Pancreas (tissue), 10 donors: ENCODE measurements at regions of chr17 and their contacts with region 1.

Region 1: DNA sequence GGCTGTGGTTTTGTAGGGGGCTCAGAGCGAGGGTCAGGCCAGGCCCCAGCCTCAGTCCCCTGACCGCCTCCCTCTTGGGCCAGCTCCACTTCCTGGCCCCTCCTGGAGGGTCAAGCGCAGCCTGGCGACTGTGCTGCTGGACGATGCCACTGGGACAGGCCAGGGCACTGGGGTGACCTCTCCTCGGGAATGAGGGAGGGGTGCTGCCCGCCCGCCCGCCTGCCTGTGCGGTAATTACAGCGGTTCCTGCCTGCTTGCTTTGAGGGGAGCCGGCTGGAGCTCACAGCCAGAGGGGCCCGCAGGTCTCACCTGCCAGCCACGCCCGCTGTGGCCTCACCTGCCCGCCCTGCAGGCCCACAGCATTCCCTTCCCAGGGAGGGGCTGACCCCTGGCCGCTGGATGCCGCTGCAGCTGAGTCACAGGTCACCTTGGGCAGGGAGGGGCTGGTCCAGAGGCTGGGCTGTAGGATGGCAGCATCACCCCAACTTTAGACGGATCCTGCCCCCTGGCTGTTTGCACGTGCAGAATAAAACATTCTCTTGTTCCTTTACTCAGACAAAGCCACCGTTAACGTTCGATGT is 76.7 kb upstream of the CBX4 start:
- DNase-seq: peak in 4 of 6 donors; percentile 60 to 82 (median 65)
- ATAC-seq: peak in 2 of 4 donors; percentile 12 to 26
- H3K4me3 ChIP-seq: no peak overlapping the region
- H3K27ac ChIP-seq: no peak overlapping the region
- H3K4me1 ChIP-seq: peaks cover 19 to 25% (median 19%) of the 10 kb centered on the region in 3 donors
- H3K27me3 ChIP-seq: no peaks in the 10 kb centered on the region
- CTCF ChIP-seq: no peak

Region 2: GRCh38 chr17:79691931-79692330 is 224.0 kb before region 1 on chr17:
- intact Hi-C with region 1: no loop called
- DNase-seq: no peak
- ATAC-seq: no peak
- H3K4me3 ChIP-seq: no peak overlapping the region
- H3K27ac ChIP-seq: no peak overlapping the region
- H3K4me1 ChIP-seq: no peaks in the 10 kb centered on the region
- H3K27me3 ChIP-seq: no peaks in the 10 kb centered on the region
- CTCF ChIP-seq: no peak

Region 3: GRCh38 chr17:79850571-79851461 is 65.1 kb before region 1 on chr17:
- intact Hi-C with region 1: loop called in 1 of 3 experiments (anchors 10 kb)
- DNase-seq: peak in 1 of 6 donors; percentile 36
- ATAC-seq: no peak
- H3K4me3 ChIP-seq: no peak overlapping the region
- H3K27ac ChIP-seq: peak overlapping the region in 1 of 4 donors; percentile 51
- H3K4me1 ChIP-seq: no peaks in the 10 kb centered on the region
- H3K27me3 ChIP-seq: no peaks in the 10 kb centered on the region
- CTCF ChIP-seq: no peak

Region 4: GRCh38 chr17:79970576-79971068 is 54.7 kb after region 1 on chr17:
- intact Hi-C with region 1: no loop called
- DNase-seq: peak in 2 of 6 donors; percentile 11 to 56
- ATAC-seq: peak in 1 of 4 donors; percentile 58
- H3K4me3 ChIP-seq: no peak overlapping the region
- H3K27ac ChIP-seq: no peak overlapping the region
- H3K4me1 ChIP-seq: peaks cover 0 to 9% (median 4%) of the 10 kb centered on the region in 3 donors
- H3K27me3 ChIP-seq: no peaks in the 10 kb centered on the region
- CTCF ChIP-seq: peak in 1 of 4 donors; percentile 15

Region 5: GRCh38 chr17:80092959-80093358 is 177.0 kb after region 1 on chr17:
- intact Hi-C with region 1: no loop called
- DNase-seq: no peak
- ATAC-seq: peak in 2 of 4 donors; percentile 69 to 79
- H3K4me3 ChIP-seq: no peak overlapping the region
- H3K27ac ChIP-seq: peak overlapping the region in 2 of 4 donors; percentile 6 to 44
- H3K4me1 ChIP-seq: no peaks in the 10 kb centered on the region
- H3K27me3 ChIP-seq: no peaks in the 10 kb centered on the region
- CTCF ChIP-seq: no peak